Activated B cell treated with CpG ODN at 0.5 μM for 24 hours (primary cell): ENCODE measurements at regions of chr5 and their contacts with region 1.

Region 1: DNA sequence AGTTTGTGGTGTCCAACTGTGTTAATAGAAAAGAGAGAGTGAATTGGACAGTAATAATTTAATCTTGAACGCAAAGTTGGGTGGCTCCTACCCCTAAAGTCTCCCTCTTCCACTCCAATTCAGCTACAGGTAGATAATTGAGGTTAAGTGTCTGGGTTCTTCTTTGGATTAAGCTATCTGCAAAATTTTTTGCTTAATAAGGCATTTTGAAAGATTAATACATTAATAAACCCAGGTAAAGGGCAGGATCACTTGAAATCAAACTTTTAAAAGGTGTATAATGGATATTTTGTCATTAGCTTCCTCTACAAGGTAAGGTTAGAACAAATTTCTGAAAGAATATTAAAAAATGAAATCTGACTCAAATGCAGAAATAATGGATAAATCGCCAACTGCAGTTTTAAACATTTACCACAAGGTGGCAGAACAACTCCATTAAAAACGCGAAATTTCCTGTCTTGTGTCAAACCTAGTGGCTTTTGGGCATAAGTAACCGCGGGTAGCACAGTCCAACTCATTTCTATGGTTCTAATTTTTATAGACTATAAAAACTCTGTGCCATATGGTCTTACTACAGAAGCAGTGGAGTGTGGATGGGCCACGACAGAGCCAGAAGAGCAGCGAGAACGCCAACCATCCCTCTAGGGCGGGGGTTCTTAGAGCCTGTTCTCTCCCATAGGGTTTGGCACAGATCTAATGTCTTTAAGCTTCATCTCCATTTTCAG is 276.5 kb downstream of the ARHGEF28 start:
- DNase-seq: no peak
- ATAC-seq: no peak
- H3K4me3 Mint-ChIP-seq: no peak overlapping the region
- H3K27ac Mint-ChIP-seq: no peak overlapping the region
- H3K4me1 Mint-ChIP-seq: peaks cover 5% of the 10 kb centered on the region
- H3K27me3 Mint-ChIP-seq: peaks cover 15% of the 10 kb centered on the region
- CTCF ChIP-seq: peak; percentile 69

Region 2: DNA sequence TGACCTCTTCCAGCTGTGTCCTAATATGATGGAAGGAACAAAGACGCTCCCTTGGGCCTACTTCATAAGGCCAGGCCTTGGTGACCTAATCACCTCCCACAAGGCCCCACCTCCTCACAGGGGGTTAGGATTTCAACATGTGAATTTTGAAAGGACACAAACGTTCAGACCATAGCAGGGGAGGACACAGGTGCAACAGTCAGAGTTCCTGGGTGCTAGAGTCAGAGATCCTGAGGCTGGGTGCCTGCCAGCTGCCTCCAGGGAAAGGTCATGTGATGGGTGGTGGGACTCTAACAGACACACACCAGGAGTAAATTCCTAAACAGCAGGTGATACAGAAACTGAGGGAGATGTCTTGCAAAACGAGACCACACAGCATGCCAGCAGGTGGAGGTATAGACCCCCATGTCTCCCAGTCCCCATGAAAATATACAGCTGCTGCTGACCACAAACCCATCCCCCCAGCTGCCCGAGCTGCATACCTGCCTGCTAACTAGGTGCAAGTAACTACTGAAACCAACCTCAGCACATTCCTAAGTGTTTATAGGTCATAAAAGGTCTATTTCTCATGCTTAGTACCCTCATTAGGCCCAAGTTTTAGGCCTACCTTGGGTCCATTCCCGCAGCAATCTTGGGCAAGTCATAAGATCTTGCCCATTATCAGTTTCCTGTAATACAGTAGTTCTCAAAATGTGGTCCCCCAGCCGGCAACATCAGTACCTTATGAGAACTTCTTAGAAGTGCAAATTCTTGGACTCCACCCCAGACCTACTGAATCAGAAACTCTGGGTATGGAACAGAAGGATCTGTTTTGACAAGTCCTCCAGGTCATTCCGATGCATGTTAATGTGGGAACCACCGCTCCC is 492.7 kb after region 1 on chr5:
- CTCF ChIA-PET with region 1: no interaction called
- POLR2A ChIA-PET with region 1: no interaction called
- intact Hi-C with region 1: loop called (anchors 10 kb)
- DNase-seq: no peak
- ATAC-seq: no peak
- H3K4me3 Mint-ChIP-seq: no peak overlapping the region
- H3K27ac Mint-ChIP-seq: no peak overlapping the region
- H3K4me1 Mint-ChIP-seq: no peaks in the 10 kb centered on the region
- H3K27me3 Mint-ChIP-seq: no peaks in the 10 kb centered on the region
- CTCF ChIP-seq: no peak

Region 3: DNA sequence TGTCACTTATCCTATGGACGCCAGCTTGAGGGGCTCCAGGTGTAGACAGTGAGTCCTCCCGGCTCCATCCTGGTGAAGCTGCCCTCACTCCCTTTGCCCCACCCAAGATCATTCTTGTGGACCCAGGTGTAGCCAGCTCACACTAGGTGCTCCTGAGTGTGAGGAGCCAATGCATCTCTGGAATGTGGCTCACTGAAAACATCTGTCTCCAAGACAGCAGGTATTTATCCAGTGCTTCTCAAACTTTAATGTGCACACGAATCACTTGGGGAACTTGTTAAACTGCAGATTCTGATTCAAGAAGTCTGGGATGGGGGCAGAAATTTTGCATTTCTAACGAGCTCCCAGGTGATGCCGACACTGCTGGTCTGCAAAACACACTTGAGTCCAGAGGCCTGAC is 751.5 kb after region 1 on chr5:
- CTCF ChIA-PET with region 1: interaction called, 52 read pairs
- POLR2A ChIA-PET with region 1: no interaction called
- intact Hi-C with region 1: loop called (anchors 1 kb)
- DNase-seq: no peak
- ATAC-seq: no peak
- H3K4me3 Mint-ChIP-seq: no peak overlapping the region
- H3K27ac Mint-ChIP-seq: no peak overlapping the region
- H3K4me1 Mint-ChIP-seq: no peaks in the 10 kb centered on the region
- H3K27me3 Mint-ChIP-seq: peaks cover 7% of the 10 kb centered on the region
- CTCF ChIP-seq: no peak

Region 4: GRCh38 chr5:74919487-74919886 is 1017.0 kb after region 1 on chr5:
- CTCF ChIA-PET with region 1: no interaction called
- POLR2A ChIA-PET with region 1: no interaction called
- intact Hi-C with region 1: loop called (anchors 1 kb)
- DNase-seq: no peak
- ATAC-seq: no peak
- H3K4me3 Mint-ChIP-seq: no peak overlapping the region
- H3K27ac Mint-ChIP-seq: no peak overlapping the region
- H3K4me1 Mint-ChIP-seq: no peaks in the 10 kb centered on the region
- H3K27me3 Mint-ChIP-seq: peaks cover 6% of the 10 kb centered on the region
- CTCF ChIP-seq: no peak

Region 5: DNA sequence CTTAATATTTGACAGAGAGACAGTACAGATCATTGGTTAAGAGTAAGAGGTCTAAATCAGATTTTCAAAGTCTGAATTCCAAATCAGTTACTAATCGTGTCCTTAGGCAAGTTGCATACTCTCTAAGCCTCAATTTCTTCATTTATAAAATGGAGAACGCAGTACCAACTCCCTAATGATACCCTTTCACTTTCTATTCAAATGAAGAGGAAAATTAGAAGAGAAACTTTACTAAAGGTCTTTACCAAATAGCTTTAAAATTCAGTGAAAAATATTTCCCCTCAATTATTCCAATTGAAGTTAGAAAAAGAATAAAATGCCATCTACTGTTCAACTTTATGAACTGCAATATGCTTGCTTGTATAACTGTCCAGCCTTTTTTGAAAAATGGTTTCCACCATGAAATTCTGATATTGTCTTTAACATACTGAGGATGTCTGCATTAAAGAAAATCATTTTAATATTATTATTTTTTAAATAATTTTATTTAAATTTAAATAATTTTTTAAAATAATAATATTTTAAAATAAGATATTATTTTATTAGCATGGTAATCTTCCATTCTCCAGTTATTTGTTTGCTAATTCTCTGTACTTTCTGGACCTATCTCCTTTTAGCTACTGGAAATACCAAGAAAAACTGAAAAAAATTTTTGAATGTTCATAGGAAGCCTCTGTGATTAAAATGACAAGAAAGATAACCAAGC is 1778.8 kb after region 1 on chr5:
- CTCF ChIA-PET with region 1: no interaction called
- POLR2A ChIA-PET with region 1: no interaction called
- intact Hi-C with region 1: loop called (anchors 2 kb)
- DNase-seq: no peak
- ATAC-seq: peak; percentile 45
- H3K4me3 Mint-ChIP-seq: no peak overlapping the region
- H3K27ac Mint-ChIP-seq: no peak overlapping the region
- H3K4me1 Mint-ChIP-seq: no peaks in the 10 kb centered on the region
- H3K27me3 Mint-ChIP-seq: no peaks in the 10 kb centered on the region
- CTCF ChIP-seq: peak; percentile 82